MCF 10A (cell line): ENCODE measurements at regions of chr9 and their contacts with region 1.

Region 1: GRCh38 chr9:130866474-130866965 is 30.1 kb downstream of the QRFP start:
- DNase-seq: peak; percentile 94
- H3K4me3 Mint-ChIP-seq: no peak overlapping the region
- H3K27ac Mint-ChIP-seq: no peak overlapping the region
- H3K4me1 Mint-ChIP-seq: peaks cover 6% of the 10 kb centered on the region
- H3K27me3 Mint-ChIP-seq: no peaks in the 10 kb centered on the region
- CTCF ChIP-seq: peak; percentile 80

Region 2: GRCh38 chr9:130701056-130702022 is 165.2 kb before region 1 on chr9:
- CTCF ChIA-PET with region 1: interaction called, 224 read pairs
- POLR2A ChIA-PET with region 1: interaction called, 5 read pairs
- intact Hi-C with region 1: no loop called
- DNase-seq: peak; percentile 76
- H3K4me3 Mint-ChIP-seq: no peak overlapping the region
- H3K27ac Mint-ChIP-seq: no peak overlapping the region
- H3K4me1 Mint-ChIP-seq: peaks cover 19% of the 10 kb centered on the region
- H3K27me3 Mint-ChIP-seq: no peaks in the 10 kb centered on the region
- CTCF ChIP-seq: peak; percentile 79

Region 3: DNA sequence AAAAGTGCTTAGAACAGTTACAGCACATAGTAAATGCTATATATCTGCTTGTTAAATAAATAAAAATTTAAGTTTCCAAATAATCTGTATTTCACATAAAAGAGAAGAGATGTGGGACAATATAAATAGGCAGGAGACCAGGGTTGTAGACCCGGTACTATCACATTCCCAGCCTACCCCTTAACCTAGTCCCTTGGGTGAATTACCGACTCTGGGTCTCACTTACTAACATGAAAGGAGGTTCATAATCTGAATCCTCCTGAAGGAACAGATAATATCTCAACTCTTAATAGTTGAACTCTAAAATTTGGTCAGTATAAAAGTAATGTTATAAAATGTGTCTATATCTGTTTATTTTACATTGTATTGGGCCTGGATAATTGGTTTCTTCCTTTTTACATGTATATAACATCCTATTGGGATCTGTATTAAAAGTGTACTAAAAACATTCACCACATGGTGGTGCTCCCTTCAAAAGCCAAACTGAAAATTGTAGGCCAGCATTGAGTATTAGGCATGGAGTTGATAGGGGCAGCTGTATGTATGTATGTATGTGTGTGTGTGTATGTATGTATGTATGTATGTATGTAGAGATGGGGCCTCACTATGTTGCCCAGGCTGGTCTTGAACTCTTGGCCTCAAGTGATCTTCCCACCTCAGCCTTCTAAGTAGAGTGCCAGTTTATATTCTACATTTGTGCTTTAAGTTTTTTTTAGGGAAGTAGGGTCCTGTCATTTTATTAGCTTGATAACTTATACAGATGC is 95.7 kb before region 1 on chr9:
- CTCF ChIA-PET with region 1: interaction called, 235 read pairs
- POLR2A ChIA-PET with region 1: interaction called, 6 read pairs
- intact Hi-C with region 1: loop called (anchors 1 kb)
- DNase-seq: peak; percentile 76
- H3K4me3 Mint-ChIP-seq: no peak overlapping the region
- H3K27ac Mint-ChIP-seq: no peak overlapping the region
- H3K4me1 Mint-ChIP-seq: peaks cover 17% of the 10 kb centered on the region
- H3K27me3 Mint-ChIP-seq: no peaks in the 10 kb centered on the region
- CTCF ChIP-seq: peak; percentile 75

Region 4: GRCh38 chr9:130834371-130835311 is 31.9 kb before region 1 on chr9 and contains the start of gene ABL1:
- CTCF ChIA-PET with region 1: interaction called, 5 read pairs
- POLR2A ChIA-PET with region 1: interaction called, 3 read pairs
- intact Hi-C with region 1: loop called (anchors 1 kb)
- DNase-seq: peak; percentile 89
- H3K4me3 Mint-ChIP-seq: peak within 1 kb of the TSS; percentile 90
- H3K27ac Mint-ChIP-seq: peak within 1 kb of the TSS; percentile 99
- H3K4me1 Mint-ChIP-seq: peaks cover 47% of the 10 kb centered on the region
- H3K27me3 Mint-ChIP-seq: no peaks in the 10 kb centered on the region
- CTCF ChIP-seq: no peak
- total RNA-seq, gene ABL1: 67.5 TPM in 2 replicates

Region 5: GRCh38 chr9:130940693-130941576 is 74.4 kb after region 1 on chr9:
- CTCF ChIA-PET with region 1: interaction called, 25 read pairs
- POLR2A ChIA-PET with region 1: interaction called, 3 read pairs
- intact Hi-C with region 1: loop called (anchors 1 kb)
- DNase-seq: peak; percentile 87
- H3K4me3 Mint-ChIP-seq: no peak overlapping the region
- H3K27ac Mint-ChIP-seq: no peak overlapping the region
- H3K4me1 Mint-ChIP-seq: peaks cover 24% of the 10 kb centered on the region
- H3K27me3 Mint-ChIP-seq: peaks cover 11% of the 10 kb centered on the region
- CTCF ChIP-seq: peak; percentile 81

Region 6: GRCh38 chr9:131046581-131047202 is 180.2 kb after region 1 on chr9:
- CTCF ChIA-PET with region 1: interaction called, 52 read pairs
- POLR2A ChIA-PET with region 1: no interaction called
- intact Hi-C with region 1: loop called (anchors 1 kb)
- DNase-seq: peak; percentile 69
- H3K4me3 Mint-ChIP-seq: no peak overlapping the region
- H3K27ac Mint-ChIP-seq: no peak overlapping the region
- H3K4me1 Mint-ChIP-seq: no peaks in the 10 kb centered on the region
- H3K27me3 Mint-ChIP-seq: no peaks in the 10 kb centered on the region
- CTCF ChIP-seq: peak; percentile 86